ENCODE measurements at regions of chr6 and their contacts with region 1.

Region 1: GRCh38 chr6:142926494-142927270 is 18.3 kb downstream of the HIVEP2 start:
- DNase-seq: peak; percentile 18 to 60 (median 38)
- ATAC-seq: peak; percentile 86
- H3K4me3 ChIP-seq: peak overlapping the region; percentile 33
- H3K27ac ChIP-seq: no peak overlapping the region
- H3K4me1 ChIP-seq: peaks cover 0 to 10% of the 10 kb centered on the region in 2 experiments; a peak in 3 of 5 replicates
- H3K27me3 ChIP-seq: peaks cover 18 to 22% of the 10 kb centered on the region in 2 experiments
- CTCF ChIP-seq: no peak
- EP300 ChIP-seq: no peak
- POLR2A ChIP-seq: no peak
- RAD21 ChIP-seq: no peak

Region 2: DNA sequence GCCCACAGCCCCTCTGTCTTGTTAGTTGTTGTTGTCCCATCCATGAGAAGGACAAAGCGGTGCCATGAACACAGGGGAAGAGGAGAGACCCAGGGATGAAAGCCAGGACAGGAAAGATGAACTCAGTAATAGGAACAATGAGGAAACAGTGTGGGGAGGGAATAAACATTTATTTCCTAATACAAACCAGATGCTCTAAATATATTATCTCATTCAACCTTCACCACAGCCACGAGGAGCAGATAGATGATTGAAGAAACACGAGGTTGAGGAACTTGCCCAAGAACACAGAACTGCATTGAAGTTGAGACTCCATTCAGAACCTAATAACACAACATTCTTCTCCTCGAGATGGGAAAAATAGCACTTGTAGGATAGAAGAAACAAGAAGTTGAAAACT is 81.0 kb after region 1 on chr6:
- CTCF ChIA-PET with region 1: no interaction called
- POLR2A ChIA-PET with region 1: no interaction called
- in situ Hi-C with region 1: no loop called
- intact Hi-C with region 1: no loop called
- DNase-seq: no peak
- ATAC-seq: no peak
- H3K4me3 ChIP-seq: no peak overlapping the region
- H3K27ac ChIP-seq: no peak overlapping the region
- H3K4me1 ChIP-seq: no peaks in the 10 kb centered on the region
- H3K27me3 ChIP-seq: peaks cover 0 to 5% of the 10 kb centered on the region in 2 experiments; a peak in 1 of 5 replicates
- CTCF ChIP-seq: no peak
- EP300 ChIP-seq: no peak
- POLR2A ChIP-seq: no peak
- RAD21 ChIP-seq: no peak

Region 3: DNA sequence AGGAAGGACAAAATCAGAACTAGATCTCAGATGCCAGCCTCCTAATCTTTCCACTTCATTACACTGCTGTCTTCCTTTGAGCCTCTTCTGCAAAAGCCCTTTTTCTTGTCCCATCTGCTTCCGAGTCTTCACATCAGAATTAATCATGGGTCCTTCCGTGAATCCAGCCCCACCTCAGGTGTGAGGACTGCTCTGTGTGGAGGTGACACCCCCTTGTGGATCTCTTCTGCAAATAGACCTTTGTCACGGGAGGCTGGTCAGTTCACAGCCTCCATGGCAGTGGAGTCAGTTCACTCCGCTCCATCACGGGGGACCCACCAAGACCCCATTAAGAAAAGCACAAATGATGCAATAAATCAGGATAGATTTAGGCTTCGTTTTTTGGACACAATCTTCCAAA is 352.7 kb after region 1 on chr6:
- CTCF ChIA-PET with region 1: no interaction called
- POLR2A ChIA-PET with region 1: no interaction called
- in situ Hi-C with region 1: no loop called
- intact Hi-C with region 1: loop called (anchors 10 kb)
- DNase-seq: peak; percentile 39 to 64 (median 59)
- ATAC-seq: peak; percentile 99
- H3K4me3 ChIP-seq: no peak overlapping the region
- H3K27ac ChIP-seq: no peak overlapping the region
- H3K4me1 ChIP-seq: no peaks in the 10 kb centered on the region
- H3K27me3 ChIP-seq: no peaks in the 10 kb centered on the region
- CTCF ChIP-seq: peak; percentile 69 to 80 (median 70)
- EP300 ChIP-seq: no peak
- POLR2A ChIP-seq: no peak
- RAD21 ChIP-seq: peak; percentile 60 to 81

Measured in K562 (cell line).